Mammary epithelial cell (primary cell): ENCODE measurements at regions of chr6 and their contacts with region 1.

Region 1: GRCh38 chr6:7992002-7992815 is 72.0 kb downstream of the BLOC1S5 start:
- DNase-seq: peak; percentile 28
- H3K4me3 ChIP-seq: no peak overlapping the region
- H3K27ac ChIP-seq: no peak overlapping the region
- H3K4me1 ChIP-seq: no peaks in the 10 kb centered on the region
- H3K27me3 ChIP-seq: no peaks in the 10 kb centered on the region
- CTCF ChIP-seq: peak; percentile 30 to 40

Region 2: DNA sequence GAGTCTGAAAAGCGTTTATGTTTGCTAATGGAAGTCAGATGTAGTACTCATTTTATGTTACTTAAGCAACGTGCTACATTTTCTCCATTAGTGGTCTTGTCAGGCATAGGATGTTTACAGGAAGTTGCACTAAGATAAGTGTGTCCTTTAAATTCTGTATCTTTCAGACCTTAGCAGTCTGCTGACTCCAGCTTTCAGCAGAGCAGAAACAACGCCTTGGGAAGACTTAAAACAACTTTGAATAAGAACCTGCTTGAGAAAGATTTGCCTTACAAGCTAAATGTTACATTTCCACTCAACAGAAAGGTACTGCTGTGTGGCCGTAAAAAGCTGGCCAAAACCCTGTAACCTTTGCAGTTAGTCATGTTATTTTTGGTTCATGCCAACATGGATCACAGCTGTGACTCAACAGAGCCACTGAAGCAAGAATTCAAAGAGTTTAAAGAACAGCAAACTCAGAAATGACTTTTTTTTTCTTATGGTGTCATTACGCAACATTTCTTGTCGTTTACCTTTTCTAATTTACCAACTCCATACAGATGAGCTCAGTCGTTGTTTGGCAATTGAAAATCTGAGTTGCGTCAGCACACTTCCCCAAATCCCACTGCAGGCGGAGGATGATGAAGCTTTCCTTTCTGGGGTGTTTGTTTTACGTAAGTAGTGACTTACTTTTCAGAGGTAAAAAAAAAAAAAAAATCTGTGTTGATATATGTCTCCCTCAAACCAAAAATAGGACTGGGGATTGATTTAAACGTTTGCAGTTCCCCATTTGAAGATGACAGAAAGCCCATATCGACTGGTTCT is 294.2 kb before region 1 on chr6:
- CTCF ChIA-PET with region 1: no interaction called
- dilution Hi-C with region 1: no loop called
- in situ Hi-C with region 1: no loop called
- intact Hi-C with region 1: no loop called
- DNase-seq: peak; percentile 96
- H3K4me3 ChIP-seq: peak overlapping the region in 1 of 3 experiments; percentile 1
- H3K27ac ChIP-seq: peak overlapping the region; percentile 87
- H3K4me1 ChIP-seq: peaks cover 18% of the 10 kb centered on the region
- H3K27me3 ChIP-seq: no peaks in the 10 kb centered on the region
- CTCF ChIP-seq: no peak

Region 3: DNA sequence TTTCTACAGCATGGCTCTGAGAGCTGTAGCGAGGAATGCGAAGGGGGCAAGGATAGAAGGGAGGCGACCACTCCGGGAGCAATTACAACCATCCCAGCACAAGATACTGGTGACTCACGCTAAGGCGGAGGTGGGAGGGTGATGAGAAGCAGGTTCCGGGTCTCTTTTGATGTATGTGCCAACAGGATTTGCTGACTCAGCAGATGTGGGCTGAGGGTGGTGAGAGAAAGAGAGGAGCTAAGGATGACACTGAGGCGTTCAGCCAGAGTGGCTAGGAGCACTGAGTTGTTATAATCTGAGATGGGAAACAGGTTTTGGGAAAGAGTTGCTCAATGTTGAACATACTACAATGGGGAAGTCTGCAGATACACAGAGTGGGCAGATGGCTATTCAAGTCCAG is 72.3 kb before region 1 on chr6:
- CTCF ChIA-PET with region 1: no interaction called
- dilution Hi-C with region 1: no loop called
- in situ Hi-C with region 1: no loop called
- intact Hi-C with region 1: loop called (anchors 5 kb)
- DNase-seq: peak; percentile 79
- H3K4me3 ChIP-seq: no peak overlapping the region
- H3K27ac ChIP-seq: no peak overlapping the region
- H3K4me1 ChIP-seq: peaks cover 12% of the 10 kb centered on the region
- H3K27me3 ChIP-seq: peaks cover 3% of the 10 kb centered on the region
- CTCF ChIP-seq: no peak